SK-N-SH (cell line): ENCODE measurements at regions of chr1 and their contacts with region 1.

Region 1: GRCh38 chr1:207077470-207078377 is 10.9 kb upstream of the C4BPB start:
- DNase-seq: peak; percentile 59
- H3K4me3 ChIP-seq: no peak overlapping the region
- H3K27ac ChIP-seq: no peak overlapping the region
- H3K4me1 ChIP-seq: no peaks in the 10 kb centered on the region; a peak in 1 of 4 replicates
- H3K27me3 ChIP-seq: no peaks in the 10 kb centered on the region; the same call in 1 of the 2 replicates
- CTCF ChIP-seq: peak; percentile 92
- EP300 ChIP-seq: no peak
- RAD21 ChIP-seq: peak; percentile 93

Region 2: DNA sequence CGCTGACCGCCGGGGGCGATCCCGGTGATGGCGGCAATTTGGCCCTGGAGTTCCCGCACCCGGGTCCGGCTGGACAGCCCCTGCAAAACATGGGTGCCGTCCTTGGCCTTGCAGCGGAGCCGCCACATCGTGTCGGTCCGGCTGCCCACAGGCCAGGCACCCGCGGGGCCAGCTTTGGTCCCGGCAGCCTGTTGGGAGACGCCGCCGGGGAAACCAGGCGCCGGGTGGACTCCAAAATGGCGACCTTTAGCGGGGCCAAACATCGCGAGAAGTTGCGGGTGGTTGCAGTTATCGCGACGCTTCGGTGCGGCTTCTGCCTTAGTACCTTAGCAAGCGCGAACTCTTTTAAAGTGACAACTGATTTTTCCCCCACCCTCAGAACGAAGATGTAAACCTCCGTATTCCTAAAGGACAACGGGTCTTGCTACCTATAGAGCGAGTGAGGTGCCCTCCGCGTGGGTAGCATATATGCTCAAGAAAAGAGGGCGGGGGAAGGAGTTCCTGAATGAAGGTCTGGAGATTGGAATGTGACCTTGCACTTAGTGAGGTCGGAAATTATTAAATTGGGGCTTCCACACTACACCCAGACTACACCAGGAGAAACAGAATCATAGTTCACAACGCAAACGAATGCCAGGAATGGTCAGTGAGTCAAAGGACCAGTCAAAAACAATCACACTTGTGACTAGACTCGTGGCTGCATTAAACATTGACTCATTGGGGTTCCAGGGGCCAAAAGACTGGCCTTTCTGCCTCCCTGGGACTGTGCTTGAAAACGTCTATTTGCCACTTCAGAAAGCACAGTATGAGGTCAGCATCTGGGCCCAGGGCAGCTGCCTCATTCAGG is 26.7 kb before region 1 on chr1 and contains the start of gene YOD1:
- CTCF ChIA-PET with region 1: interaction called, 30 read pairs
- POLR2A ChIA-PET with region 1: no interaction called
- DNase-seq: peak; percentile 91
- H3K4me3 ChIP-seq: peak within 1 kb of the TSS; percentile 94 to 97
- H3K27ac ChIP-seq: peak within 1 kb of the TSS; percentile 77 to 89
- H3K4me1 ChIP-seq: peaks cover 23 to 26% of the 10 kb centered on the region in 2 experiments
- H3K27me3 ChIP-seq: no peaks in the 10 kb centered on the region
- CTCF ChIP-seq: no peak
- EP300 ChIP-seq: no peak
- RAD21 ChIP-seq: no peak
- polyA plus RNA-seq, gene YOD1: 0.79 and 0.91 TPM in 2 replicates

Region 3: GRCh38 chr1:207097871-207098324 is 20.2 kb after region 1 on chr1:
- CTCF ChIA-PET with region 1: no interaction called
- POLR2A ChIA-PET with region 1: no interaction called
- DNase-seq: no peak
- H3K4me3 ChIP-seq: no peak overlapping the region
- H3K27ac ChIP-seq: no peak overlapping the region
- H3K4me1 ChIP-seq: no peaks in the 10 kb centered on the region
- H3K27me3 ChIP-seq: peaks cover 25% of the 10 kb centered on the region; the same call in 1 of the 2 replicates
- CTCF ChIP-seq: no peak
- EP300 ChIP-seq: no peak
- RAD21 ChIP-seq: no peak

Region 4: DNA sequence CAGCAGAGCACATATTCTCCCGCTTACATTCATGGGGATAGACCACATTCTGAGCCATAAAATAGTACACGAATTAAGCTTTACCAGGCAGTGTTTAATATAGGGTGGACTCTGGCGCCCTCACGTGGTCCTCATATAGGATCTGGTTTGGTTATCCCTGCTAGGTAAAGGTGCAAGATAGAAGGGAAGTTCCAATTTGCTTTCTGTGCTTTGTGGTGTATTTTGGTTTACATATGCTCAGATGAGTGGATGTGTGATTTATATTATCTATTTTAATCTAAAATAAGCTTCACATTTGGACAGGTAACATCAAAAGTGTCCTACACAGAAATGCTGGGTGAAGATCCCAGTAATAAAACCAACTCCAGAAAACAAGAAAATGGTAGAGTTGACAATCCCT is 421.8 kb after region 1 on chr1:
- CTCF ChIA-PET with region 1: interaction called, 11 read pairs
- POLR2A ChIA-PET with region 1: no interaction called
- DNase-seq: peak; percentile 62
- H3K4me3 ChIP-seq: no peak overlapping the region
- H3K27ac ChIP-seq: no peak overlapping the region
- H3K4me1 ChIP-seq: no peaks in the 10 kb centered on the region
- H3K27me3 ChIP-seq: peaks cover 36% of the 10 kb centered on the region
- CTCF ChIP-seq: peak; percentile 77
- EP300 ChIP-seq: no peak
- RAD21 ChIP-seq: peak; percentile 85